ENCODE measurements at regions of chr5 and their contacts with region 1.

Region 1: GRCh38 chr5:177303121-177303924 is at the starts of genes PRELID1 and RAB24:
- DNase-seq: peak; percentile 92
- H3K4me3 ChIP-seq: peak within 1 kb of the TSS; percentile 100
- H3K27ac ChIP-seq: peak within 1 kb of the TSS; percentile 73
- H3K4me1 ChIP-seq: peaks cover 69% of the 10 kb centered on the region
- CTCF ChIP-seq: peak; percentile 60
- total RNA-seq, gene PRELID1: 217 and 249 TPM in 2 replicates
- total RNA-seq, gene RAB24: 25.8 and 43.1 TPM in 2 replicates

Region 2: GRCh38 chr5:176994460-176995121 is 308.7 kb before region 1 on chr5:
- CTCF ChIA-PET with region 1: no interaction called
- POLR2A ChIA-PET with region 1: no interaction called
- intact Hi-C with region 1: loop called (anchors 10 kb)
- DNase-seq: peak; percentile 95
- H3K4me3 ChIP-seq: peak overlapping the region; percentile 47
- H3K27ac ChIP-seq: peak overlapping the region; percentile 92
- H3K4me1 ChIP-seq: peaks cover 74% of the 10 kb centered on the region
- CTCF ChIP-seq: no peak

Region 3: GRCh38 chr5:177320879-177321278 is 17.6 kb after region 1 on chr5:
- CTCF ChIA-PET with region 1: no interaction called
- POLR2A ChIA-PET with region 1: no interaction called
- intact Hi-C with region 1: no loop called
- DNase-seq: no peak
- H3K4me3 ChIP-seq: no peak overlapping the region
- H3K27ac ChIP-seq: no peak overlapping the region
- H3K4me1 ChIP-seq: peaks cover 4% of the 10 kb centered on the region
- CTCF ChIP-seq: no peak

Measured in OCI-LY7 (cell line).